Activated CD8-positive, alpha-beta T cell treated with anti-CD3 and anti-CD28 coated beads, Interleukin-2, amount 10 ng/mL, durations not matched to agents 7 days and 5 days (primary cell): ENCODE measurements at regions of chr12 and their contacts with region 1.

Region 1: GRCh38 chr12:123106628-123107359 is 44.1 kb downstream of the PITPNM2 start:
- DNase-seq: peak; percentile 86
- ATAC-seq: peak; percentile 92
- H3K4me3 Mint-ChIP-seq: peak overlapping the region; percentile 62
- H3K27ac Mint-ChIP-seq: peak overlapping the region; percentile 98
- H3K4me1 Mint-ChIP-seq: peaks cover 70% of the 10 kb centered on the region
- H3K27me3 Mint-ChIP-seq: no peaks in the 10 kb centered on the region

Region 2: GRCh38 chr12:123120452-123121166 is 13.8 kb after region 1 on chr12:
- CTCF ChIA-PET with region 1: interaction called, 28 read pairs
- POLR2A ChIA-PET with region 1: interaction called, 30 read pairs
- DNase-seq: peak; percentile 54
- ATAC-seq: peak; percentile 61
- H3K4me3 Mint-ChIP-seq: peak overlapping the region; percentile 26
- H3K27ac Mint-ChIP-seq: peak overlapping the region; percentile 93
- H3K4me1 Mint-ChIP-seq: peaks cover 47% of the 10 kb centered on the region
- H3K27me3 Mint-ChIP-seq: no peaks in the 10 kb centered on the region

Region 3: GRCh38 chr12:123131879-123132452 is 25.2 kb after region 1 on chr12:
- CTCF ChIA-PET with region 1: interaction called, 7 read pairs
- POLR2A ChIA-PET with region 1: interaction called, 10 read pairs
- DNase-seq: peak; percentile 58
- ATAC-seq: peak; percentile 87
- H3K4me3 Mint-ChIP-seq: peak overlapping the region; percentile 55
- H3K27ac Mint-ChIP-seq: peak overlapping the region; percentile 89
- H3K4me1 Mint-ChIP-seq: peaks cover 33% of the 10 kb centered on the region
- H3K27me3 Mint-ChIP-seq: no peaks in the 10 kb centered on the region

Region 4: DNA sequence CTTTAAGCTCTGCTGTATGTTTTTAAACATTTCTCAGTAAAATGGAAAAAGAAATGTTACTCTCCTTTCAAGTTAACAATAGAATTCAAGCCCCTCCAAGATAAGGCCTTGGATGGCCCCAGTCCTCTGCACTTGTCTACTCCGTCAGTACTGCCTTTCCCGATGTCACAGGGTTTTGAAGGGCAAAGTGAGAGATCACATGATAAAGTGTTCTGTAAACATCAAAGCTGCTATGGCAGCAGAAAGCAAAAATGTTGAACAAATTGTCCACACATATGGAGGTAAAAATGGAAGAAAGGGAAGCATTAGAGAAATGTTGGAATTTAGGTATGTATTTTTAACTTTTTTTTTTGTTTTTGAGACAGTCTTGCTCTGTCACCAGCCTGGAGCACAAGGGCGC is 198.3 kb after region 1 on chr12:
- CTCF ChIA-PET with region 1: no interaction called
- POLR2A ChIA-PET with region 1: no interaction called
- DNase-seq: no peak
- ATAC-seq: no peak
- H3K4me3 Mint-ChIP-seq: no peak overlapping the region
- H3K27ac Mint-ChIP-seq: peak overlapping the region; percentile 22
- H3K4me1 Mint-ChIP-seq: no peaks in the 10 kb centered on the region
- H3K27me3 Mint-ChIP-seq: no peaks in the 10 kb centered on the region